Calu3 (cell line): ENCODE measurements at regions of chr18 and their contacts with region 1.

Region 1: GRCh38 chr18:21548637-21549036 is 51.9 kb downstream of the ESCO1 start:
- DNase-seq: no peak
- H3K4me3 Mint-ChIP-seq: no peak overlapping the region
- H3K27ac Mint-ChIP-seq: no peak overlapping the region
- H3K4me1 Mint-ChIP-seq: no peaks in the 10 kb centered on the region
- H3K27me3 Mint-ChIP-seq: no peaks in the 10 kb centered on the region
- CTCF ChIP-seq: no peak

Region 2: DNA sequence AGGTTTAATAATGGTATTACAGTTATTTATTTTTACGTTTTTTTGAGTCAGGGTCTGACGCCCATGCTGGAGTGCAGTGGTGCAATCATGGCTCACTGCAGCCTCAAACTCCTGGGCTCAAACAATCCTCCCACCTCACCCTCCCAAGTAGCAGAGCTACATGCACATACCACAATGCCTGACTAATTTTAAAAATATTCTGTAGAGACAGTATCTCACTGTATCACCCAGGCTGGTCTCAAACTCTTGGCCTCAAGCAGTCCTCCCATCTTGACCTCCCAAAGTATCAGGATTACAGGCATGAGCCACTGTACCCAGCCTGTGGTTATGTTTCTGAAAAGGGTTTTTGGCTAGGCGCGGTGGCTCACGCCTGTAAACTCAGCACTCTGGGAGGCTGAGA is 68.9 kb before region 1 on chr18:
- CTCF ChIA-PET with region 1: no interaction called
- intact Hi-C with region 1: no loop called
- DNase-seq: no peak
- H3K4me3 Mint-ChIP-seq: no peak overlapping the region
- H3K27ac Mint-ChIP-seq: no peak overlapping the region
- H3K4me1 Mint-ChIP-seq: peaks cover under 1% of the 10 kb centered on the region
- H3K27me3 Mint-ChIP-seq: no peaks in the 10 kb centered on the region
- CTCF ChIP-seq: no peak

Region 3: GRCh38 chr18:21584391-21584790 is 35.8 kb after region 1 on chr18:
- CTCF ChIA-PET with region 1: no interaction called
- intact Hi-C with region 1: no loop called
- DNase-seq: no peak
- H3K4me3 Mint-ChIP-seq: no peak overlapping the region
- H3K27ac Mint-ChIP-seq: no peak overlapping the region
- H3K4me1 Mint-ChIP-seq: peaks cover 6% of the 10 kb centered on the region
- H3K27me3 Mint-ChIP-seq: no peaks in the 10 kb centered on the region
- CTCF ChIP-seq: no peak

Region 4: DNA sequence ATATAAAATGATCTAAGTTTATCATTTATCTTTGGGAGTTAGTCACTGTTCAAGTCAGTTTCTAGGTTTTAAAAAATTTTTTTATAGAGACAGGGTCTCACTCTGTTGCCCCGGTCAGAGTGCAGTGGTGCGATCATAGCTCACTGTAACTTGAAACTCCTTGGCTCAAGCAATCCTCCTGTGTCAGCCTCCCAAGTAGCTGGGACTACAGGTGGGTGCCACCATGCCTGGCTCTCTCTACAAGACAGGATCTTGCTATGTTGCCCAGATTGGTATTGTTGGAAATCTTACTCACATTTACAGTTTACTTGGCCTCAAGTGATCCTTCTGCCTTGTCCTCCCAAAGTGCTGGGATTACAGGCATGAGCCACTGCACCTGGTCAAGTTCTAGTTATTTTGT is 266.5 kb after region 1 on chr18:
- CTCF ChIA-PET with region 1: no interaction called
- intact Hi-C with region 1: loop called (anchors 10 kb)
- DNase-seq: no peak
- H3K4me3 Mint-ChIP-seq: no peak overlapping the region
- H3K27ac Mint-ChIP-seq: no peak overlapping the region
- H3K4me1 Mint-ChIP-seq: peaks cover 6% of the 10 kb centered on the region
- H3K27me3 Mint-ChIP-seq: no peaks in the 10 kb centered on the region
- CTCF ChIP-seq: no peak